ENCODE measurements at regions of chr1 and their contacts with region 1.

Region 1: DNA sequence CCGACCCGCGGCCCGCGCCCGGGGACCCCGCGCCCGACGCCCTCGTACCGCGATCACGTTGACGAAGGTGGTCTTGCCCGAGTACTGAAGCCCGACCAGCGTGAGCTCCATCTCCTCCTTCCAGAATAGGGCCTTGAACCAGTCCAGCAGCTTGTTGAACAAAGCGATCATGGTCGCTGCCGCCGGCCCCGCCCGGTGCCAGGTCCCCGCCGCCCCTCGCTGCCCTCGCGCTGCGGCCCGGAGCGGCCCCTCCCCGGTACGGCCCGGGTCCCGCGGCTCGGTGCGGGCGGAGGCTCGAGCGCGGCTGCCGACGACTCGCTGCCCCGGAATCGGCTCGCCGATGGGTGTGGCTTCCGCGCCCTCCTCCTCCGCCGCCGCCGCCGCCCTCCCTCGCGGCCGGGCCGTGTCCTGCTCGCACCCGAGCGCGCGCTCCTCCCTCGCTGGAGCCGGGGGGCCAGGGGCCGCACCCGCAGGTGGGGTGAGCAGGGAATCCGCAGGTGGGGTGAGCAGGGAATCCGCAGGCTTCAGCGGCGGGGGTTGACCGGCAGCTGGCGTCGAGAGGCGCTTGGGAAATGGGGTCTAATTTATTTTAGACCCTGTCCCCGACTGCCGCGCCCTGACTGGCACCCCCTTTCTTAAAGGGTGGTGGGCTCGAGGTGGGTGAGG is at the start of gene ARL8A:
- DNase-seq: peak; percentile 72
- H3K4me3 Mint-ChIP-seq: peak within 1 kb of the TSS; percentile 86
- H3K27ac Mint-ChIP-seq: peak within 1 kb of the TSS; percentile 86
- H3K4me1 Mint-ChIP-seq: peaks cover 12% of the 10 kb centered on the region
- H3K27me3 Mint-ChIP-seq: no peaks in the 10 kb centered on the region
- CTCF ChIP-seq: no peak
- total RNA-seq, gene ARL8A: 94.8 and 126 TPM in 2 replicates

Region 2: GRCh38 chr1:202034683-202035462 is 109.7 kb before region 1 on chr1:
- CTCF ChIA-PET with region 1: no interaction called
- POLR2A ChIA-PET with region 1: interaction called, 12 read pairs
- intact Hi-C with region 1: no loop called
- DNase-seq: peak; percentile 97
- H3K4me3 Mint-ChIP-seq: peak overlapping the region; percentile 30
- H3K27ac Mint-ChIP-seq: peak overlapping the region; percentile 58
- H3K4me1 Mint-ChIP-seq: peaks cover 29% of the 10 kb centered on the region
- H3K27me3 Mint-ChIP-seq: peaks cover 6% of the 10 kb centered on the region
- CTCF ChIP-seq: no peak

Region 3: DNA sequence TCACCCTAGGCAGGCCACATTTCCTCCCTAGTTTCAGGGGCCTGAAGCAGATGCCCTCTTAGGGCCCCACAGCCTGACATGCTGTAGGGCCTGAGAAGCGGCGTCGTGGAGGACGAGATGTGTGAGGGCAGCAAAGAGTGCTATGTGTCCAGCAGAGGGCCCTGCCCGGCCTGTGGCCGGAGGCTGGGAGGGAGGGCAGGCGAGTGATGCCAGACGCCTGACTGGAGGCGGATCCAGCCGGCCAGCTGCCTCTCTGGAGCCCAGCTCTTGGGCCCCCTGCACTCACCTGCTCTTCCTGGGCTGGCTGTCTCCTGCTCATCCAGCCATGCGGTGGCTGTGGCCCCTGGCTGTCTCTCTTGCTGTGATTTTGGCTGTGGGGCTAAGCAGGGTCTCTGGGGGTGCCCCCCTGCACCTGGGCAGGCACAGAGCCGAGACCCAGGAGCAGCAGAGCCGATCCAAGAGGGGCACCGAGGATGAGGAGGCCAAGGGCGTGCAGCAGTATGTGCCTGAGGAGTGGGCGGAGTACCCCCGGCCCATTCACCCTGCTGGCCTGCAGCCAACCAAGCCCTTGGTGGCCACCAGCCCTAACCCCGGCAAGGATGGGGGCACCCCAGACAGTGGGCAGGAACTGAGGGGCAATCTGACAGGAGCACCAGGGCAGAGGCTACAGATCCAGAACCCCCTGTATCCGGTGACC is 21.7 kb before region 1 on chr1 and contains the start of gene GPR37L1:
- CTCF ChIA-PET with region 1: interaction called, 18 read pairs
- POLR2A ChIA-PET with region 1: interaction called, 3 read pairs
- intact Hi-C with region 1: no loop called
- DNase-seq: peak; percentile 30
- H3K4me3 Mint-ChIP-seq: no peak within 1 kb of the TSS
- H3K27ac Mint-ChIP-seq: no peak within 1 kb of the TSS
- H3K4me1 Mint-ChIP-seq: no peaks in the 10 kb centered on the region
- H3K27me3 Mint-ChIP-seq: peaks cover 17% of the 10 kb centered on the region
- CTCF ChIP-seq: peak; percentile 30
- total RNA-seq, gene GPR37L1: not detected in 2 replicates

Measured in MCF 10A (cell line).